CD8-positive, alpha-beta T cell (primary cell): ENCODE measurements at regions of chr16 and their contacts with region 1.

Region 1: GRCh38 chr16:24552705-24553246 is 13.4 kb downstream of the RBBP6 start:
- DNase-seq: no peak
- ATAC-seq: no peak
- H3K4me3 ChIP-seq: no peak overlapping the region
- H3K4me3 Mint-ChIP-seq: no peak overlapping the region
- H3K27ac ChIP-seq: no peak overlapping the region
- H3K27ac Mint-ChIP-seq: peak overlapping the region; percentile 49
- H3K4me1 ChIP-seq: peaks cover 12% of the 10 kb centered on the region
- H3K4me1 Mint-ChIP-seq: peaks cover 46% of the 10 kb centered on the region
- H3K27me3 ChIP-seq: no peaks in the 10 kb centered on the region
- H3K27me3 Mint-ChIP-seq: no peaks in the 10 kb centered on the region
- CTCF ChIP-seq: no peak

Region 2: DNA sequence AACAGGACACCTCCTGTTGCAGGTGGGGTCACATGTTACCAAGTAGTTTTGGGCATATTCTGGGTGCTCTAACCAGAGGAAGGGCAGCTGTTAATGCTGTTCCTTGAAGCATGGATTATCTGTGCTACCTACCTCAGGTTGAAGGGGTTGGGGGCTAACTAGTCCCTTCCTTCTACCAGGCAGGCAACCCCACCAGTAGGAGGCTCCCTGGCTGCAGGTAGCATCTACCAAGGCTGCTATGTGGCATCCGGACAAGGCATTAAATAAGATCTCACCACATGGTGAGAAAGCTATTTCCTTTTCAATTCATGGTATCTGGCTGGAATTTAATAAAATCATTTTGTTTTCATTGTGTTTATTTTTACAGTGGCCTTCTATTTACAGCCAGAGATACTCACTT is 234.1 kb before region 1 on chr16:
- CTCF ChIA-PET with region 1: no interaction called
- POLR2A ChIA-PET with region 1: no interaction called
- intact Hi-C with region 1: no loop called
- DNase-seq: peak in 1 of 9 experiments; percentile 5
- ATAC-seq: no peak
- H3K4me3 ChIP-seq: no peak overlapping the region
- H3K4me3 Mint-ChIP-seq: no peak overlapping the region
- H3K27ac ChIP-seq: no peak overlapping the region
- H3K27ac Mint-ChIP-seq: no peak overlapping the region
- H3K4me1 ChIP-seq: no peaks in the 10 kb centered on the region
- H3K4me1 Mint-ChIP-seq: no peaks in the 10 kb centered on the region
- H3K27me3 ChIP-seq: no peaks in the 10 kb centered on the region
- H3K27me3 Mint-ChIP-seq: peaks cover 39% of the 10 kb centered on the region
- CTCF ChIP-seq: no peak

Region 3: GRCh38 chr16:24516900-24517669 is 35.7 kb before region 1 on chr16:
- CTCF ChIA-PET with region 1: interaction called, 5 read pairs
- POLR2A ChIA-PET with region 1: no interaction called
- intact Hi-C with region 1: loop called in 1 of 2 experiments (anchors 5 kb)
- DNase-seq: peak; percentile 42 to 83 (median 77)
- ATAC-seq: peak; percentile 81
- H3K4me3 ChIP-seq: no peak overlapping the region
- H3K4me3 Mint-ChIP-seq: no peak overlapping the region
- H3K27ac ChIP-seq: no peak overlapping the region
- H3K27ac Mint-ChIP-seq: no peak overlapping the region
- H3K4me1 ChIP-seq: no peaks in the 10 kb centered on the region
- H3K4me1 Mint-ChIP-seq: peaks cover 4% of the 10 kb centered on the region
- H3K27me3 ChIP-seq: no peaks in the 10 kb centered on the region
- H3K27me3 Mint-ChIP-seq: peaks cover 6% of the 10 kb centered on the region
- CTCF ChIP-seq: peak; percentile 93

Region 4: GRCh38 chr16:25106567-25107465 is 554.0 kb after region 1 on chr16:
- CTCF ChIA-PET with region 1: no interaction called
- POLR2A ChIA-PET with region 1: no interaction called
- intact Hi-C with region 1: no loop called
- DNase-seq: peak; percentile 30 to 83 (median 70)
- ATAC-seq: peak; percentile 5
- H3K4me3 ChIP-seq: peak overlapping the region; percentile 67 to 87
- H3K4me3 Mint-ChIP-seq: peak overlapping the region; percentile 97
- H3K27ac ChIP-seq: peak overlapping the region; percentile 61 to 89
- H3K27ac Mint-ChIP-seq: peak overlapping the region; percentile 97
- H3K4me1 ChIP-seq: peaks cover 17% of the 10 kb centered on the region
- H3K4me1 Mint-ChIP-seq: peaks cover 40% of the 10 kb centered on the region
- H3K27me3 ChIP-seq: no peaks in the 10 kb centered on the region
- H3K27me3 Mint-ChIP-seq: no peaks in the 10 kb centered on the region
- CTCF ChIP-seq: no peak